ENCODE measurements at regions of chr10 and their contacts with region 1.

Region 1: DNA sequence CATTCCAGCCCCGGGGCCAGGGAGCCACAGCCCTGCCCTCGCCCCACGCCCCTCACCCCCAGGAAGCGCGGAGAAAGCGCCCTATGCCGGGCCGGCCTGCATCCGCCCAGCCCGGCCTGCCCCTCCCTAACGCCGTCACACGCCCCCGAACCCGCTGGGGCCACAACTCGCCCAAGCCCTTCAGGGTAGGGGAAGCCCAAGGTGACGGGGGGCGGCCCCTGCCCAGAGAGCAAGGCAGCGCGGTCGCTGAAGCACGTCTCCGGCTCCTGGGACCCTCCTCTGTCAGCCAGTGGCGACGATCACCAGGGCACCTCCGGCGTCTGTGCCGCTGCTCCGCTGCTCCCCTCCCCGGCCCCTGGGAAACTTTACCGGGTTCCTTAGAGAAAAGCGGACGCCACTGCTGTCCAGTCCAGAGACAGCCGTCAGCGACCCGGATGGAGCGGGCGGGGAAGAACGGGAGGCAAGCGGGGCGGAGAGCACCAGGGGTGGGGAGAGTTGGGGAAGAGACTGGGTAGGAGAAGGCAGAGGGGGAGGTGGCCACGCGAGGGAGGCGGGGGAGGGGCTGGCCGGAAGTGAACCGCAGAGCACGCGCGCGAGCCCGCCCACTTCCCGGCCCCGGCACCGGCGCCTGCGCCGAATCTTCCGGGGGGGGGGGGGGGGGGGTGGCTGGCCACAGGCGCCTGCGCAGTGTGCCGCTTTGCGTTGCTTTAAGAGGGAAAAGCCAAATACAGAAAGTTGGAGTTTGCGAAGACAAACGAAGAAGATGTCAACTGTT is at the start of gene HERC4:
- DNase-seq: peak; percentile 90 to 94
- H3K4me3 ChIP-seq: peak within 1 kb of the TSS; percentile 85 to 100 (median 95)
- H3K27ac ChIP-seq: peak within 1 kb of the TSS; percentile 98
- H3K4me1 ChIP-seq: peaks cover 0 to 5% of the 10 kb centered on the region in 2 donors
- H3K27me3 ChIP-seq: no peaks in the 10 kb centered on the region
- CTCF ChIP-seq: peak in 2 of 3 donors; percentile 9 to 16
- POLR2A ChIP-seq: peak; percentile 37
- total RNA-seq, gene HERC4: 43.2 to 81.4 (median 66.2) TPM

Region 2: DNA sequence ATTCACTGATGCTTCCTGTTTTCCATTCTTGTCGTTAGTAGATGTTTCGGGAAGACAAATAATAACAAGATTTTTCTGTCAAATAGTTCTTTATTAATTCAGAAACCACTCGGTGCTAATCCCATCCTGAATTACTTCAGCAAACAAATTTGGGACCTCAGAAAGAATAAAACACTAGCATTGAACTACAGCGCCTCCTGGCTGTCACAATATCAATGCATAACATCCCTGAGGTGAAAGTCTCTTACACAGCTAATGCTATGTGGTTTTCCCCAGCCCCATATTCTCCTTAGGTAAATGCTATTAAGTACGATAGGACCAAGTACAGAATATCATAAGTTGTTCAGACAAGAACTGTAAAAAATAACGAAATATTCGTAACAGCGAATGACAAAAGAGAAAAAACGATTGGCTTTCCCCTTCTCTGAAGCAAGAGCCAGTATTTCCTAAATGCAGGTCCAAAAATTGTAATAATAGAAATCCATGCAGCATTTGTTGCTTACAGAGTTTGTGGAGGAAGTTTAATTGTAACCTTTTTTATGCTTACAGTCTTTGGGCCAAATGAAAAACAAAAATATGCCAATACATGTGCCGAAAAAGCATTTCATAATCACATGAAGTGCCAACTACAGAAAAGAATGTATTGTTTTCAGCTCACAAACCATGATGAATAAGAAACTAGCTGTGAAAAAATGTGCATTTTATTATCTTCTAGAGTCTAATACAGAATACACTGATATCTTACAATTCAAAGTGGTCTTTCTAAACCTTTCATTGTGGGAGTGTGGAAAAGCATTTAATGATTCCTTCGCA is 81.6 kb after region 1 on chr10:
- intact Hi-C with region 1: loop called (anchors 10 kb)
- DNase-seq: peak in 1 of 2 donors; percentile 26
- H3K4me3 ChIP-seq: no peak overlapping the region
- H3K27ac ChIP-seq: no peak overlapping the region
- H3K4me1 ChIP-seq: no peaks in the 10 kb centered on the region
- H3K27me3 ChIP-seq: no peaks in the 10 kb centered on the region
- CTCF ChIP-seq: peak; percentile 13 to 75 (median 67)
- POLR2A ChIP-seq: no peak

Region 3: GRCh38 chr10:69315100-69315542 is 1240.2 kb after region 1 on chr10:
- intact Hi-C with region 1: no loop called
- DNase-seq: no peak
- H3K4me3 ChIP-seq: no peak overlapping the region
- H3K27ac ChIP-seq: no peak overlapping the region
- H3K4me1 ChIP-seq: peaks cover 4 to 6% of the 10 kb centered on the region in 2 donors
- H3K27me3 ChIP-seq: no peaks in the 10 kb centered on the region
- CTCF ChIP-seq: no peak
- POLR2A ChIP-seq: no peak